K562 (cell line): ENCODE measurements at regions of chr7 and their contacts with region 1.

Region 1: DNA sequence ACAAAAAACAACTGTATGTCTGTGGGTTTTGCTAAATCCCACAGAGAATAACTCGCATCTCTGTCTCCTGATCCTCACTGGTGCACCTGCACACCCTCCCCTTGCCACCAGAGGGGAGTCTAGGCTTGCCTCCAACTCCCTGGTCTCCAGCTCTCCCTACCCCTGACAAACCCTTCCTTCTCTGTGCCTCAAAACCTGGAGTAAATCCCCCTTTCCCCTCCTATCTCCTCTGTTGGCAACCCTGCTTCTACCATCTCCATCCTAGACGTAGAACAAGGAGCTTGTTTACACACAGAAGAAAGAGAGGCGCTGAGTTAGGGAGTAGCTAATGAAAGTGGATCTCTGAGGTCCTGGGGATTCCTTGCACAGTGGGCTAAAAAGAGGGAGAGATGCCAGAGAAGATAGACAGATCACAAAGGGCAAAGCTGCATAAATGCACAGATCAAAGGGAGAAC is 6.0 kb downstream of the MBLAC1 start:
- DNase-seq: peak; percentile 76 to 87 (median 84)
- ATAC-seq: peak; percentile 93
- H3K4me3 ChIP-seq: no peak overlapping the region
- H3K27ac ChIP-seq: no peak overlapping the region
- H3K4me1 ChIP-seq: peaks cover 10% of the 10 kb centered on the region in 2 experiments
- H3K27me3 ChIP-seq: no peaks in the 10 kb centered on the region; a peak in 2 of 5 replicates
- CTCF ChIP-seq: peak; percentile 98 to 99 (median 98)
- EP300 ChIP-seq: no peak
- POLR2A ChIP-seq: no peak
- RAD21 ChIP-seq: peak; percentile 99

Region 2: DNA sequence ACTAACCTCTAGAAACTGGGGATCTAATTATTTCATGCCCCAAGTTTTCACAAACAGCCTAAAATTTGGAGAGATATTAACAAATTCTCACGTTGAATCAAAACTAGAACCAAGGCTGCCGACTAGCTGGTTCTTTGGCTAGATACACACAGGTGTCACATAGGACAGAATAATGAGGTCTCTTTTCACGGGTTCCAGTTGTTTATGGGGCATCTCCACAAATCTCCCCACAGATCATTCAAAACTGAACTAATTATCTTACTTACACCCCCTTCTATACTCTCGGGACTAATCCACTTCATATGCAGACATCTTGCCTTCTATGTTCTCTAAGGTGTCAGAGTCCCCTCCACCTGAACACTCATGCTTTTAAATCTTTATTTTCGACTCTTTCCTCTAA is 239.4 kb before region 1 on chr7:
- CTCF ChIA-PET with region 1: no interaction called
- POLR2A ChIA-PET with region 1: no interaction called
- in situ Hi-C with region 1: no loop called
- intact Hi-C with region 1: no loop called
- DNase-seq: no peak
- ATAC-seq: no peak
- H3K4me3 ChIP-seq: no peak overlapping the region
- H3K27ac ChIP-seq: no peak overlapping the region
- H3K4me1 ChIP-seq: no peaks in the 10 kb centered on the region; a peak in 2 of 5 replicates
- H3K27me3 ChIP-seq: no peaks in the 10 kb centered on the region
- CTCF ChIP-seq: no peak
- EP300 ChIP-seq: no peak
- POLR2A ChIP-seq: no peak
- RAD21 ChIP-seq: no peak

Region 3: DNA sequence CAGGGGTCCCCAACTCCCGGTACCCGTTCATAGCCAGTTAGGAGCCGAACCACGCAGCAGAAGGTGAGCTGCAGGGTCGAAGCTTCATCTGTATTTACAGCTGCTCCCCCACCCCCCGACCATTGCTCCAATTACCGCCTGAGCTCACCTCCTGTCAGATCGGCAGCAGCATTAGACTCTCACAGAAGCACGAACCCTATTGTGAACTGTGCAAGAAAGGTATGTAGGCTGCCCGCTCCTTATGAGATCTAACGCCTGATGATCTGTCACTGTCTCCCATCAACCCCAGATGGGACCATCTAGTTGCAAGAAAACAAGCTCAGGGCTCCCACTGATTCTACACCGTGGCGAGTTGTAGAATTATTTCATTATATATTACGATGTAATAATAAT is 142.3 kb before region 1 on chr7:
- CTCF ChIA-PET with region 1: interaction called, 12 read pairs
- POLR2A ChIA-PET with region 1: interaction called, 4 read pairs
- in situ Hi-C with region 1: loop called (anchors 5 kb)
- intact Hi-C with region 1: loop called (anchors 1 kb)
- DNase-seq: no peak
- ATAC-seq: no peak
- H3K4me3 ChIP-seq: no peak overlapping the region
- H3K27ac ChIP-seq: no peak overlapping the region
- H3K4me1 ChIP-seq: peaks cover 7 to 16% of the 10 kb centered on the region in 2 experiments; a peak in 3 of 5 replicates
- H3K27me3 ChIP-seq: peaks cover 24 to 45% of the 10 kb centered on the region in 2 experiments
- CTCF ChIP-seq: no peak
- EP300 ChIP-seq: no peak
- POLR2A ChIP-seq: no peak
- RAD21 ChIP-seq: no peak

Region 4: DNA sequence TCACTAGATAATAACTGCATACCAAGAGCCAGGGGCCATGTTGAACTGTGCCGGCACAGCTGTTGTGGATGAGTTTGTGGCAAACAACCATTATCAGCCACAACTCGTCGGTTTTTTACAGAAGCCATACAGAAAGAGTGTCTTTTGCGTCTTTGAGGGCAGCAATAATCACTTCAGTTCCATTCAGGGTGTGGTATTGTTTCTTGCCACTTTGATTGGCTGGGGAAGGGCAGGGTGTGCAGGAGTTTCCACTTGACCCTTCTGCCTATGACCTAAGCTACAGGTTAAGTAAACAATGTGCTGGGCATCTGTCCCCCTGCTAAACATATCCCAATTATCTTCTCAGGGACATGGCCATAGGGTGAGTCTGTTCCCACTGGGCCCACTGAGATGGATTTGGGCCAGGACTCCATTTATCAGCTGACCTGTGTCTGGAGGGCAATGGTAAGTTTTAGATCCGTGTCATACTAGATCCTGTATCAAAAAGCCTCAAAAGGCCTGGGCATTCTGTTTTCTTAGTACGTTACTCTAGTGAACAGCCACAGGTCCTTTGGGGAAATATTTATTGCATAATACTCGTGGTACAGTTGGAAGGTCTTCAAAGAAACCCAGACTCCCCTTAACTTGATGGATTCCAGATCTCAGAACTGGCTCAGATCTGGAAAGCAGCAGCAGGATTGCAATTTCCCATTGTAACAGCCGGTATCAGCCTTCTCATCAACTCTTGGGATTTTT is 67.1 kb before region 1 on chr7:
- CTCF ChIA-PET with region 1: no interaction called
- POLR2A ChIA-PET with region 1: no interaction called
- in situ Hi-C with region 1: no loop called
- intact Hi-C with region 1: no loop called
- DNase-seq: peak; percentile 57 to 74 (median 63)
- ATAC-seq: peak; percentile 69
- H3K4me3 ChIP-seq: no peak overlapping the region
- H3K27ac ChIP-seq: no peak overlapping the region
- H3K4me1 ChIP-seq: peaks cover 5 to 19% of the 10 kb centered on the region in 2 experiments; a peak in 3 of 5 replicates
- H3K27me3 ChIP-seq: no peaks in the 10 kb centered on the region
- CTCF ChIP-seq: no peak
- EP300 ChIP-seq: no peak
- POLR2A ChIP-seq: no peak; the same call in 1 of the 2 replicates
- RAD21 ChIP-seq: no peak

Region 5: GRCh38 chr7:100148559-100149350 is 16.0 kb after region 1 on chr7 and contains the start of gene LAMTOR4:
- CTCF ChIA-PET with region 1: no interaction called
- POLR2A ChIA-PET with region 1: interaction called, 13 read pairs
- in situ Hi-C with region 1: no loop called
- intact Hi-C with region 1: no loop called
- DNase-seq: peak; percentile 99 to 100 (median 100)
- ATAC-seq: peak; percentile 99
- H3K4me3 ChIP-seq: peak within 1 kb of the TSS; percentile 87
- H3K27ac ChIP-seq: peak within 1 kb of the TSS; percentile 68
- H3K4me1 ChIP-seq: peaks cover 14 to 38% of the 10 kb centered on the region in 2 experiments; a peak in 4 of 5 replicates
- H3K27me3 ChIP-seq: no peaks in the 10 kb centered on the region
- CTCF ChIP-seq: peak in 1 of 3 experiments; percentile 6; a peak in 1 of 6 replicates
- EP300 ChIP-seq: no peak; the same call in 1 of the 2 replicates
- POLR2A ChIP-seq: peak; percentile 92
- RAD21 ChIP-seq: no peak
- polyA plus RNA-seq, gene LAMTOR4: 206 to 314 TPM

Region 6: DNA sequence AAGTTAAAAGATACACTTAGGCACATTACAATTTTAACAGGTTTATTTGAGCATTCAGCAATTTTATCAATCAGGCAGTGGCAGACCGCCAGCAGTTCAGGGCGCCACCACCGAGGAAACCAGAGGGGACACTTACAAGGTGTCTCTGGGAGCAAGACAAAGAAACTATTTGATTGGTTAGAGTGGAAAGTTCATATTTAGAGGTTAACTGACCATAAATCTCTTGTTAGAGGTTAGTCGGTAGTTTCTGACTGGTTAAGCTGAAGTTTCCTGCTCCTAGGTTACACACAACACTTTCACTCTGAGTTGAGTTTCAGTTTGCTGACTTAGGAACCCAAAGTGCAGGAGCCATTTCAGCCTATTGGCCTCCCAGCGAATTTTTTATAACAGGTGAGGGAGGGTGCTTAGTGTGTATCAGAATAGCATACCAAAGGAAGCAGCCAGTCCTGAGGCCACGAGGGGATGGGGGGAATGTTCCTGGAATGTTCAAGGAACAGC is 76.2 kb after region 1 on chr7:
- CTCF ChIA-PET with region 1: interaction called, 3 read pairs
- POLR2A ChIA-PET with region 1: interaction called, 3 read pairs
- in situ Hi-C with region 1: loop called (anchors 5 kb)
- intact Hi-C with region 1: no loop called
- DNase-seq: peak in 2 of 4 experiments; percentile 63 to 64
- ATAC-seq: peak; percentile 84
- H3K4me3 ChIP-seq: peak overlapping the region; percentile 2; the same call in 1 of the 2 replicates
- H3K27ac ChIP-seq: peak overlapping the region; percentile 7; the same call in 1 of the 3 replicates
- H3K4me1 ChIP-seq: peaks cover 8 to 15% of the 10 kb centered on the region in 2 experiments; a peak in 4 of 5 replicates
- H3K27me3 ChIP-seq: no peaks in the 10 kb centered on the region
- CTCF ChIP-seq: peak in 2 of 3 experiments; percentile 17 to 18; a peak in 2 of 6 replicates
- EP300 ChIP-seq: no peak
- POLR2A ChIP-seq: no peak
- RAD21 ChIP-seq: no peak

Region 7: GRCh38 chr7:100221231-100221718 is 88.6 kb after region 1 on chr7:
- CTCF ChIA-PET with region 1: interaction called, 54 read pairs
- POLR2A ChIA-PET with region 1: interaction called, 3 read pairs
- in situ Hi-C with region 1: no loop called
- intact Hi-C with region 1: loop called (anchors 1 kb)
- DNase-seq: no peak
- ATAC-seq: no peak
- H3K4me3 ChIP-seq: no peak overlapping the region
- H3K27ac ChIP-seq: no peak overlapping the region
- H3K4me1 ChIP-seq: peaks cover 9 to 23% of the 10 kb centered on the region in 2 experiments; a peak in 4 of 5 replicates
- H3K27me3 ChIP-seq: no peaks in the 10 kb centered on the region
- CTCF ChIP-seq: no peak
- EP300 ChIP-seq: no peak
- POLR2A ChIP-seq: no peak
- RAD21 ChIP-seq: no peak

Region 8: GRCh38 chr7:100407285-100408180 is 274.8 kb after region 1 on chr7:
- CTCF ChIA-PET with region 1: interaction called, 5 read pairs
- POLR2A ChIA-PET with region 1: no interaction called
- in situ Hi-C with region 1: no loop called
- intact Hi-C with region 1: loop called (anchors 2 kb)
- DNase-seq: peak; percentile 69 to 85 (median 75)
- ATAC-seq: peak; percentile 96
- H3K4me3 ChIP-seq: no peak overlapping the region
- H3K27ac ChIP-seq: no peak overlapping the region
- H3K4me1 ChIP-seq: peaks cover 4 to 5% of the 10 kb centered on the region in 2 experiments; a peak in 1 of 5 replicates
- H3K27me3 ChIP-seq: peaks cover 24 to 33% of the 10 kb centered on the region in 2 experiments
- CTCF ChIP-seq: peak; percentile 74 to 92 (median 86)
- EP300 ChIP-seq: peak; percentile 35; the same call in 1 of the 2 replicates
- POLR2A ChIP-seq: no peak
- RAD21 ChIP-seq: peak; percentile 56 to 79

Region 9: GRCh38 chr7:100435401-100436304 is 302.9 kb after region 1 on chr7:
- CTCF ChIA-PET with region 1: no interaction called
- POLR2A ChIA-PET with region 1: no interaction called
- in situ Hi-C with region 1: no loop called
- intact Hi-C with region 1: no loop called
- DNase-seq: peak; percentile 65 to 82 (median 73)
- ATAC-seq: peak; percentile 45
- H3K4me3 ChIP-seq: peak overlapping the region; percentile 85
- H3K27ac ChIP-seq: peak overlapping the region; percentile 96
- H3K4me1 ChIP-seq: peaks cover 59 to 81% of the 10 kb centered on the region in 2 experiments
- H3K27me3 ChIP-seq: no peaks in the 10 kb centered on the region
- CTCF ChIP-seq: no peak
- EP300 ChIP-seq: no peak
- POLR2A ChIP-seq: peak; percentile 77
- RAD21 ChIP-seq: no peak